Panc1 (cell line): ENCODE measurements at regions of chr1 and their contacts with region 1.

Region 1: DNA sequence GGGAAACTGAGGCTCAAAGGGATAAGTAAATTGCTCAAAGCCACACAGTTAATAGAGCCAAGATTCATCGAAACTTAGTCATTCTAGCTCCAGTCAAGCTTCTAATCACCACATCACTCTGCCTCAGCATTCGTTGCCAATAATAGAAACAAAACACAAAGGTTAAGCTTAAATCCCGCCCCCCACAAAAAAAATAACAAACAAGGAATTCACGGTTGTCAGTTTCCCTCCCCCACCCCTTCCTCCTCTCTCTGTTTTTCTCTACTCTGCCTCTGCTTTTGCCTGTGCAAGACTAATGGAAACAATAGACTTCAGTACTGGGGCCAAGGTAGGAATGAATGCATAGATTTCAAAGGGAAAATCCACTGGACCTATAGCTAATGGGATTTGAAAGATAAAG is 70.7 kb upstream of the ZNF644 start:
- DNase-seq: no peak
- ATAC-seq: no peak
- H3K4me3 ChIP-seq: no peak overlapping the region
- H3K27ac ChIP-seq: no peak overlapping the region
- H3K4me1 ChIP-seq: no peaks in the 10 kb centered on the region
- H3K27me3 ChIP-seq: no peaks in the 10 kb centered on the region; the same call in 1 of the 2 replicates
- CTCF ChIP-seq: no peak

Region 2: GRCh38 chr1:90045853-90046563 is 1046.5 kb before region 1 on chr1:
- CTCF ChIA-PET with region 1: interaction called, 13 read pairs
- POLR2A ChIA-PET with region 1: no interaction called
- in situ Hi-C with region 1: no loop called
- intact Hi-C with region 1: no loop called
- DNase-seq: peak; percentile 25
- ATAC-seq: peak; percentile 74; the same call in 1 of the 2 replicates
- H3K4me3 ChIP-seq: no peak overlapping the region
- H3K27ac ChIP-seq: no peak overlapping the region
- H3K4me1 ChIP-seq: no peaks in the 10 kb centered on the region
- H3K27me3 ChIP-seq: peaks cover 3% of the 10 kb centered on the region; the same call in 1 of the 2 replicates
- CTCF ChIP-seq: peak; percentile 84